Pancreas (tissue), 10 donors: ENCODE measurements at regions of chr1 and their contacts with region 1.

Region 1: GRCh38 chr1:94329986-94330385 is 88.2 kb upstream of the ABCD3 start:
- DNase-seq: no peak
- ATAC-seq: peak in 3 of 4 donors; percentile 29 to 36 (median 36)
- H3K4me3 ChIP-seq: no peak overlapping the region
- H3K27ac ChIP-seq: no peak overlapping the region
- H3K4me1 ChIP-seq: peaks cover 0 to 23% (median 18%) of the 10 kb centered on the region in 3 donors
- H3K27me3 ChIP-seq: no peaks in the 10 kb centered on the region
- CTCF ChIP-seq: no peak

Region 2: GRCh38 chr1:94044290-94044823 is 285.6 kb before region 1 on chr1:
- intact Hi-C with region 1: loop called in 1 of 3 experiments (anchors 5 kb)
- DNase-seq: peak in 4 of 6 donors; percentile 24 to 56 (median 45)
- ATAC-seq: peak; percentile 51 to 66 (median 63)
- H3K4me3 ChIP-seq: no peak overlapping the region
- H3K27ac ChIP-seq: peak overlapping the region in 2 of 4 donors; percentile 64 to 71
- H3K4me1 ChIP-seq: no peaks in the 10 kb centered on the region
- H3K27me3 ChIP-seq: no peaks in the 10 kb centered on the region
- CTCF ChIP-seq: no peak

Region 3: GRCh38 chr1:94061513-94062443 is 268.2 kb before region 1 on chr1:
- intact Hi-C with region 1: loop called (anchors 5 to 10 kb)
- DNase-seq: peak in 5 of 6 donors; percentile 56 to 77 (median 60)
- ATAC-seq: peak; percentile 90 to 96 (median 96)
- H3K4me3 ChIP-seq: no peak overlapping the region
- H3K27ac ChIP-seq: no peak overlapping the region
- H3K4me1 ChIP-seq: no peaks in the 10 kb centered on the region
- H3K27me3 ChIP-seq: no peaks in the 10 kb centered on the region
- CTCF ChIP-seq: peak; percentile 74 to 82 (median 78)

Region 4: DNA sequence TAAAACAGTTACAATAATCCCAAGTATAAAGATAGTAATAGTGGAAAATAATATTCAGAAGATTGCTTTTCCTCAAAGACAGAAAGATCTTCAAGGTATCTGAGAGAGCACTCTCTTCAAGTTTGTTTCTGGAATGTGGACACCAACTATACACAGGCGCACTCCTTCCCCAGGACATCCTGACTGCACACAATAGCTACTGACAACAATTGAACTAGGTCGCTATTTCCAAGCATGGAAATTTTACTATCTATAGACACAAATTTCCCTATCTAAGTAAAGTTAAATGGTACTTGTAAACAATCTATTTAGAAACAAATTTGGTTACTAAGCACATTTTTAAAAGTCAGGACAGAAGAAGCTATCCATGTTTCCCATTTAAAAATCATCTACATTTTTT is 111.7 kb before region 1 on chr1:
- intact Hi-C with region 1: no loop called
- DNase-seq: no peak
- ATAC-seq: no peak
- H3K4me3 ChIP-seq: no peak overlapping the region
- H3K27ac ChIP-seq: no peak overlapping the region
- H3K4me1 ChIP-seq: no peaks in the 10 kb centered on the region
- H3K27me3 ChIP-seq: peaks cover 0 to 6% (median 0%) of the 10 kb centered on the region in 4 donors
- CTCF ChIP-seq: no peak

Region 5: DNA sequence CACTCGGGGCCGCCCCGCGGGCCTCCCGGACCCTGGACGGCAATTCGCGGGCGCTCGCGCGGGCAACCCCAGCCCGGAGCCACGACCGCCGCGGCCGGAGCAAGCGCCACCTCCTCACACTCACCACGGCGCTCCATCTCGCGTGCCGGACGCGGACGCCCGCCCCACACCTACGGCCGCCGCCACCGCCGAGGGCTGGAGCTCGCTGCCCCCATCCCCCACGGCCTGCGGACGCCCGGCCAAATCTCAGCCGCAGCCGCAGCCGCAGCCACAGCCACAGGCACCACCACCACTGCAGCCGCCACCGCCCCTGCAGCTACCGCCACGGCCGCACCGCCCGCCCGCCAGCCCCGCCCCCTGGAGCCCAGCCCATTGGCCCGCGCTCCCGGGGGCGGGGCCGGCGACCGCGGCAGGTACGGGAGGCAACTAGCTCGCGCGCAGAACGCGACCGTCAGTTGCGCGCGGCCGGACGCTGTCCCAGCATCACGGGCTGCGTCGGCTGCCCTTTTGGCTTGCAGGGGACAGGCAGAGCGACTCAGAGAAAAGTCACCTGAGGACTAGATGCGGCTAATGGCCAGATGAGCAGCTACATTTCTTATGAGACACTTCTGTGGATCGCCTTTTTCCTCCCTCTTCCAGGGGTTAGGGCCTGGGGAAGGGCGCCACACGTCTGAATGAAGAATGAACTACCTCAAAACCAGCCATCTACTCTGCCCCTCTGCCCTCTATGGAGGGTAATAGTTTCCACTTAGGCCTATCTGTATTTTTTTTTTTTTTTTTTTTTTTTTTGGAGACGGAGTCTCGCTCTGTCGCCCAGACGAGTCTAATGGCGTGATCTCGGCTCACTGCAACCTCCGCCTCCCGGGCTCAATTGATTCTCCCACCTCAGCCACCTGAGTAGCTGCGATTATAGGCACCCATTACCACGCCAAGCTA is 92.4 kb before region 1 on chr1 and contains the start of gene ARHGAP29:
- intact Hi-C with region 1: loop called in 1 of 3 experiments (anchors 10 kb)
- DNase-seq: peak; percentile 84 to 97 (median 91)
- ATAC-seq: peak; percentile 95 to 98 (median 98)
- H3K4me3 ChIP-seq: peak within 1 kb of the TSS; percentile 80 to 89 (median 88)
- H3K27ac ChIP-seq: peak within 1 kb of the TSS; percentile 73 to 91 (median 84)
- H3K4me1 ChIP-seq: peaks cover 0 to 7% (median 0%) of the 10 kb centered on the region in 3 donors
- H3K27me3 ChIP-seq: no peaks in the 10 kb centered on the region
- CTCF ChIP-seq: no peak
- total RNA-seq, gene ARHGAP29: 7.5 to 15.8 (median 9.7) TPM